Astrocyte of the cerebellum (primary cell): ENCODE measurements at regions of chr14 and their contacts with region 1.

Region 1: DNA sequence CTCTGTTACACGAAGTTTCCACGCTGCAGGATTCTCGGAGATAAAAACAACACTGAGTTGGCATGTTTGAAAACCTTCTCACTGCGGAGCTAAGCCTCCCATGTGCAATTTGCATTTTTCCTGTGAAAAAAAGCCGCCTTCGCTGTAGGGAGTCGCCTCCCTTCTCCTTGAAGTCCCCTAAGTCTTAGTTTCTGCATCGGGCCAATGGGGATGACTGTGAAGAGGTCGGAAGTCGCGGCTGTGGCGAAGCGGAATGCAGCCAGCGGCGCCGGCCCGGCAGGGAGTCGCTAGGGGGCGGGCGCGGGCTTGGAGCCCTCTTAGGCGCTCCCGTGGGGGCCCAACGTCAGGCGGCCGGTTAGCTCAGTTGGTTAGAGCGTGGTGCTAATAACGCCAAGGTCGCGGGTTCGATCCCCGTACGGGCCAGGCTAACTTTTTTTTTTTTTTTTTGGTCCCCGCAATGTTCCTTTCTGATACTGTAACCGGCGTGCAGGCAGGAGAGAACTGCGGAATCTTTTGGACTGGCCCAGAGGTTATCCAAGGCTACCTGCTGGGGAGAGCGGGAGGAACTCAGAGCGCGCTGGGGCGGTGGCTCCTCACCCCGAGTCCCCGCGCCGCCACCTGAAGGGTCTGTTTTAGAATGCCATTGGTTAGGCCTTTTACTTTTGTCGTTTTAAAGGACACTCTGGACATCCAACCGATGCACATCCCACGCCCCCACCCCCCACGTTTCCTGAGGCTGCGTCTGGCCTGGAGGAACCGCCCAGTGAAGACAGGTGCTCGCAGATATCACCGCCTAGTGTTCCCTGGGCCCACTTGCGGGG is 2.6 kb upstream of the ZNF839 start:
- DNase-seq: peak; percentile 90
- H3K4me3 ChIP-seq: peak overlapping the region; percentile 50
- CTCF ChIP-seq: peak; percentile 40

Region 2: DNA sequence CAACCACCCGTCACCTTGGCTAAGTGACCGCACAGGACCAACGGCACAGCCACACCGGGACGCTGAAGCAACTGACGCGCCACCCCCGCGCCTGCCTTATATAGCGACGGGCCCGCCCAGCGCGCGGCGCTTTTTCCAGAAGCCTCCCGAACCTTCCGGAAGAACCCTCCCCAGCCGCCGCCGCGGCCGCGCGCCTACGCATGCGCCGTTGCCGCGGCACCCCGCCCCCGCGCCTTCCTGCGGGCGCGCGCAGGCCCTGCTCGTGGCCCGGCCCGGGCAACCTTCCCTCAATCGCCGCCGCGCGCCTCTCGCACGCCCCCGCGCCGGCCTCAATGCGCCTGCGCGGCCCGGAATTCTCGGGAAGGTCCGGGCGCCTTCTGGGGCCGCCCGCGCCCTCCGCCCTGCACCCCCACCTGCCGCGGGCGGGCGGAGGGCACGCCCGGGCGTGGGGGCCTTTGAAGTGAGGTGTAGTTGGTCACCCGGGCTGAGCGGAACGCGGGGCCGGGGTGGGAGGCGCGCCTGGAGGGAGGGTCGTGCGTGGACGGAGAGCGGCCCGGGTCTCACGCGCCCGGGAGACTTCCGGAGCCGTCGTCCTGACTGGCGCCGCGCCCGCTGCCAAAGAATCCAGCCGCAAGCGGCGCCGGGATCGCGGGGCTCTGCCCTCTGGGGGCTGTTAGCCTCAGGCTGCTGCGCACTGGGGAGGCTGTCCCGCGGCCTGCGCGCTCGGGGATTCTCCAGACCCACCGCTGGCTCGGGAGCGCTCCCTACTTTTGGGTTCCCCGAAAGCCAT is 229.8 kb before region 1 on chr14 and contains the start of gene HSP90AA1:
- in situ Hi-C with region 1: loop called (anchors 25 kb)
- DNase-seq: peak; percentile 63
- H3K4me3 ChIP-seq: peak within 1 kb of the TSS; percentile 73
- CTCF ChIP-seq: peak; percentile 11

Region 3: DNA sequence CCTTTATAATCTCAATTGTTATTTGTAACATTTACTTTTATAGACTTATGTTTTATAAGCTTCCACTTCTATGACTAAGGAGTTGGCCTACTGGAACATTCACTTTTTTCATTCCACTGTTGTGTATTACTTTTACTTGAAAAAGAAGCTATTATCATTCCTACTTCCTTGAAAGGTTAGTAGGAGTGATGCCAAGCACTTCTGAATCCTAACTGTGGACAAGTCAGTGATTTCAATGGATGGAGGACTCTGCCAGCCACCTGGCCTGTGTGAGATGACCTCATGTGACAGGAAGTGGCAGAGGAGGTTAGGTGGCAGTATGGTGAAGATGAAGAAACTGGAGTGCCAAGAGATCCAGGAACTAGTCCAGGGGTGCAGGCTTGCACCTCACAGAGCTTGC is 91.8 kb after region 1 on chr14:
- in situ Hi-C with region 1: no loop called
- DNase-seq: no peak
- H3K4me3 ChIP-seq: no peak overlapping the region
- CTCF ChIP-seq: no peak